Cardiac septum (tissue), 1 donor: ENCODE measurements at regions of chr17 and their contacts with region 1.

Region 1: DNA sequence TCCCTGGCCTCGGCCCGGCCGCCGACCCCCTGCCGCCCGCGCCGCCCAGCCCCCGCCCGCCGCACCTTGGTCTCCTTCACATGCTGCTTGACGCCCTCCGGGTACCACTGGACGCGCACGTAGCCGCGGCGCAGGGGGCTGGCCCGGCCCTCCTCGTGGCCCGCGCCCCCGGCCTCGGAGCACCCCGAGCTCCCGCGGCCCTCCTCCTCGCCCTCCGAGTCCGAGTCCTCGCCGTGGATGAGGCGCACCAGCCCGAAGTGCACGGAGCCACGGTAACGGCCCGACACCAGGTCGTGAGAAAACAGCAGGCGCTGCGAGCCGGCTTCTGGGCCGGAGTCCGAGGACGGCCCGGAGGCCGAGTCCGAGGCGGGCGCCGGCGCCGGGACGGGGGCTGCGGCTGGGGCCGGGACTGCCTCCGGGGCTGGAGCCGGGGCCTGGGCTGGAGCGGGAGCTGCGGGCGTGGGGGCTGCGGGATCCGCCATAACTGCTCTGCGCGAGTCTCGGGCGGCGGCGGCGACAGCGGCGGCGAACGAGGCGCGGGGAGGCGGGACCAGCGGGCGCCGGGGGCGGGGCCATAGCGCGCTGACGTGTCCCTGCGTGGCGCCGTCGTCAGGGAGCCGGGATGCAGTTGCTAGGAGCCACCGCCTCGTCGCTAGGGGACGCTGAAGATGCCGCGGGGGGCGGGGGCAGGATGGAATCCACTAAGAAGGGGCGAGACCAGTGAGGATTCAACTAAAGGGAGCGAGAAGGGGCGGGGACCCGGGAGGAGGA is at the start of gene UBE2O:
- DNase-seq: peak; percentile 97
- total RNA-seq, gene UBE2O: 31.1 TPM

Region 2: DNA sequence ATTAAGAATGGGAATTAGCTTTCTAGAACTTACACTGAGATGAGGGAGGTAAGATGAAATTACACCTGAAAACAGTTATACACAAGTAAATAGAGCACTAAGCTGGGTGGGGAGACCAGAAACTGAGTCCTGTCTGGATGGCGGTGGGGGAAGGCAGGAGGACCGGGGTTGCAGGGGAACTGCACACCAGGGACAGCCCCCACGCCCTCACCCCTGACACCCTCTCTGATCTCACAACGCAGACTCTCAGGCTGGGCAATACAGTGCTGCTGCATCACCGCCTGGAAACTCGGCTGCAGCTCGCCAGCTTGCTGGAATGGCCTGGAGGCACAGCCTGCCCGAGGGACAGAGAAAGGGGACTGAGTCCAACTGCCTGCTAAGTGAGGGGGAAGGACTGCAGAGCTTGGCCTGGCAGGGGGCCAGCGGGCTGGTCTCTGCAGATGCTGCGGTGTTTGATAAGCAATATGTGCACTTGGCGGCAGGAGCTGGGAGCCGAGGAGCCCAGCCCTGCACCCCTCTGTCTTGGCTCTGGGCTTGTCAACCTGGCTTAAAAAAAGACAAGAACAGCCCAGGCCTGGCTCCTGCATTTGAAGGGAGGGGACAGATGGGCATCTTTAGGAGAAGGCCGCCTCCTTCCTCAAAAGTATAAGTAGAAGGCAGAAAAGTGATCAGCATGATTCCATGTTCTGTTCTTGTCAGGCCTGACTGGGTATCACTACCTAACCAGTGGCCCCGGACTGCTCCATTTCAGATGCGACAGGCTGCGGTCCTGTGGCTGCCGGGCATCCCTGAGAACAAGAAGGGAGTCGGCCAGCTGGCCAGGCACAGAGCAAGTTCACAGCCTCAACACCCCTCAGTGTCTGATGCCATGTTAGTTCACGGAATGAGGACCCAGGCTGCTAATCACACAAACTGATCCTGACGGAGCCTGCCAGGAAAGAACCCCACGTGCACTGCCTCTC is 38.2 kb before region 1 on chr17:
- intact Hi-C with region 1: loop called (anchors 2 kb)
- DNase-seq: peak; percentile 87